Sigmoid colon (tissue), 7 donors: ENCODE measurements at regions of chr16 and their contacts with region 1.

Region 1: GRCh38 chr16:25257504-25257955 is at the start of gene ZKSCAN2:
- DNase-seq: peak; percentile 95
- H3K4me3 ChIP-seq: peak within 1 kb of the TSS; percentile 80 to 91 (median 84)
- H3K27ac ChIP-seq: peak within 1 kb of the TSS; percentile 95 to 99 (median 99)
- H3K4me1 ChIP-seq: peaks cover 0 to 42% (median 29%) of the 10 kb centered on the region in 4 donors
- H3K27me3 ChIP-seq: no peaks in the 10 kb centered on the region
- CTCF ChIP-seq: no peak
- EP300 ChIP-seq: no peak
- POLR2A ChIP-seq: peak in 1 of 2 donors; percentile 19
- total RNA-seq, gene ZKSCAN2: 3.9 to 5.5 (median 4.4) TPM

Region 2: GRCh38 chr16:24539291-24539849 is 718.2 kb before region 1 on chr16 and contains the start of gene RBBP6:
- intact Hi-C with region 1: loop called (anchors 1 kb)
- DNase-seq: peak; percentile 98
- H3K4me3 ChIP-seq: peak within 1 kb of the TSS; percentile 83 to 99 (median 94)
- H3K27ac ChIP-seq: peak within 1 kb of the TSS; percentile 99 to 100 (median 100)
- H3K4me1 ChIP-seq: peaks cover 0 to 32% (median 30%) of the 10 kb centered on the region in 4 donors
- H3K27me3 ChIP-seq: no peaks in the 10 kb centered on the region
- CTCF ChIP-seq: peak in 1 of 4 experiments; percentile 26
- EP300 ChIP-seq: peak in 2 of 4 donors; percentile 81 to 82
- POLR2A ChIP-seq: peak; percentile 98 to 99
- total RNA-seq, gene RBBP6: 48.7 to 105 (median 69.0) TPM

Region 3: DNA sequence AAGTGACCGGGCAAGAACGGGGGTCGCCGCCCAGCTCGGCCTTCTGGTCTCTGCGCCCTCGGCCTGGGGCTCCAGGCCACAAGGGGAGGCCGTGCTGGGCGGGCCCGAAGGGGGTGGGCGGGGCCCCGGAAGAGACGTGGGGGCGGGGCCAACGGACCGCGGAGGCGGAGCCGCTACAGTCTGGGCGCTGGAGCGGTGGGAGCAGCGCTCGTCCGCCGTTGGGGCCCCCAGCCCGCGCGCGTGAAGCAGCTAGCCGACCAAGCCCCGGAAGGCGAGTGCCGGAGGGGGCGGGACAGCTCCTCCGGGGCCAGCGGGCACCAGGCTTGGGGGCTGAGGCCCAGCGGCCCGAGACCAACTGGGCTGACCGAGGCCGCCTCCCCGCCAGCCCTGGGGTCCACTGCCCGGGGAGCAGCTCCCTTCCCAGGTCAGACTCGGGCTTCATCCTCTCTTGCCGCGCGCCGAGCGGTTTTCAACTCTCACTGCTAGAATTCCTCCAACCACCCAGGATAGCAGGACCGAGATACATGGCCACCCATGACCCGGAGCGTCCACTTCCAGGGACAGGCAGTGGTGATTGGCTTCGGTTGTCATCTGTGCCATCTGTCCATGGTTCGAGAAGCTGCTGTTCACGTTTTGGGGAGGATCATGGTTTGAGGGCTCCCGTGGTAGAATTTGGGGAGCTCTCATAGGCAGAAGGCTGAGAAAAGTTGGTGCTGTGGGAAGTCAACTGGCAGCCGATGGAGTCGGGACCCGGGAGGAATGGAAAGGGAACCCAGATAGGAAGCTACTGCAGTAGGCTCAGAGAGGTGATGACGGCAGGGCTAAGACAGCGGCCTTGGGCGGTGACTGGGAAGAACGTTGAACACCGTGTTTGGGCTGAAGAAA is 190.5 kb before region 1 on chr16:
- intact Hi-C with region 1: loop called (anchors 10 kb)
- DNase-seq: peak; percentile 90
- H3K4me3 ChIP-seq: peak overlapping the region; percentile 71 to 87 (median 82)
- H3K27ac ChIP-seq: peak overlapping the region; percentile 94 to 96 (median 94)
- H3K4me1 ChIP-seq: peaks cover 0 to 16% (median 13%) of the 10 kb centered on the region in 4 donors
- H3K27me3 ChIP-seq: no peaks in the 10 kb centered on the region
- CTCF ChIP-seq: no peak
- EP300 ChIP-seq: no peak
- POLR2A ChIP-seq: peak; percentile 51 to 69